Activated CD4-positive, alpha-beta memory T cell treated with anti-CD3 and anti-CD28 coated beads for 36 hours (primary cell): ENCODE measurements at regions of chr9 and their contacts with region 1.

Region 1: GRCh38 chr9:4689687-4690104 is 10.3 kb downstream of the CDC37L1 start:
- DNase-seq: peak; percentile 43
- H3K4me3 Mint-ChIP-seq: no peak overlapping the region
- H3K27ac Mint-ChIP-seq: peak overlapping the region; percentile 2
- H3K4me1 Mint-ChIP-seq: peaks cover 49% of the 10 kb centered on the region
- H3K27me3 Mint-ChIP-seq: no peaks in the 10 kb centered on the region

Region 2: DNA sequence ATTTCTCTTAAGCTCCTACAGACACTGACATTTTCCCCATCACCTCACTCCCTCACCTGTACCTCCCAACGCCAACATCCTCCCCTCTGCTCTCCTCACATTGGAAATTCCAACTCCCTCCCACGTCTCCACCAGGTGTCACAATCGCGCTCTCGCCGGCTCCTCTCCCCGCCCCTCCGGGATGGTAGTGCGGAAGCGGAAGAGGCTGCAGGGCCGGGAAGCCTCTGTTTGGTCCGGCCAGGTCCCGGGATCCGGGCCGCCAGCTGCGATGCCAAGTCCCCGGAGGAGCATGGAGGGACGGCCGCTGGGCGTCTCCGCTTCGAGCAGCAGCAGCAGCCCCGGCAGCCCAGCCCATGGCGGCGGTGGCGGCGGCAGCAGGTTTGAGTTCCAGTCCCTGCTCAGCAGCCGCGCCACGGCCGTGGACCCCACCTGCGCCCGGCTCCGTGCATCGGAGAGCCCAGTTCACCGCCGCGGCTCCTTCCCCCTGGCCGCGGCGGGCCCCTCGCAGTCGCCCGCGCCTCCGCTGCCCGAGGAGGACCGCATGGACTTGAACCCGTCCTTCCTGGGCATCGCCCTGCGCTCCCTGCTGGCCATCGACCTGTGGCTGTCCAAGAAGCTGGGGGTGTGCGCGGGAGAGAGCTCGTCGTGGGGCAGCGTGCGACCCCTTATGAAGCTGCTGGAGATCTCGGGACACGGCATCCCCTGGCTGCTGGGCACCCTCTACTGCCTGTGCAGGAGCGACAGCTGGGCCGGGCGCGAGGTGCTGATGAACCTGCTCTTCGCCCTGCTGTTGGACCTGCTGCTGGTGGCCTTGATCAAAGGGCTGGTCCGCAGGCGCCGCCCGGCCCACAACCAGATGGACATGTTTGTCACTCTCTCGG is 27.3 kb before region 1 on chr9 and contains the start of gene PLPP6:
- CTCF ChIA-PET with region 1: interaction called, 5 read pairs
- POLR2A ChIA-PET with region 1: no interaction called
- intact Hi-C with region 1: loop called (anchors 1 kb)
- DNase-seq: peak; percentile 88
- H3K4me3 Mint-ChIP-seq: peak within 1 kb of the TSS; percentile 91
- H3K27ac Mint-ChIP-seq: peak within 1 kb of the TSS; percentile 80
- H3K4me1 Mint-ChIP-seq: peaks cover 55% of the 10 kb centered on the region
- H3K27me3 Mint-ChIP-seq: no peaks in the 10 kb centered on the region
- total RNA-seq, gene PLPP6: 4.4 to 4.6 TPM

Region 3: GRCh38 chr9:4725706-4726442 is 36.2 kb after region 1 on chr9:
- CTCF ChIA-PET with region 1: no interaction called
- POLR2A ChIA-PET with region 1: no interaction called
- intact Hi-C with region 1: loop called (anchors 5 kb)
- DNase-seq: no peak
- H3K4me3 Mint-ChIP-seq: no peak overlapping the region
- H3K27ac Mint-ChIP-seq: no peak overlapping the region
- H3K4me1 Mint-ChIP-seq: peaks cover 27% of the 10 kb centered on the region
- H3K27me3 Mint-ChIP-seq: no peaks in the 10 kb centered on the region